ENCODE measurements at regions of chr11 and their contacts with region 1.

Region 1: DNA sequence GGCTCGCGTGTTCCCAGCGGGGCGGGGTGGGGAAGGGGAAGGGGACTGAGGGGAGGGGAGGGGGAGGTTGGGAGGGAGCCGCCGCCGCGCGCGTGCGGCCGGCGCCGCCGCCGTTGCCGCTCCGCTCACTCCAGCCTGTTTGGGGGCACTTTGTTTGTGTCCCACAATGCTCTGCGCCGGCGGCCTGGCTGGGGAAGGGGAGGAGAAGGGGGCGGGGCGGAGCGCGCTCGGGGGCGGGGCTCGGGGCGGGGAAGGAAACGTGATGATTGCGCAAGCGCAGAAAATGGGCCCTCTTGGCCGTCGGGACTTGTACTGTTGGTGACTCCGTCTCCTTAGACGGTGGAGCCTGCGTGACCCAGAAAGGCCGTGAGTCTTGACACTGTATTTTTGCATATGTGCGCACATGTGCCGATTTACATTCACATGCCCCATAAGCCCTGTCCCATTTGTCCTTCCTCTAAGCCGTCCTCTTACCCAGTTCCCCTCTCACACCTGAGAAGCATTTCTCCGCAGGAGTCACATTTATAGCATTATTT is at the start of gene ZBTB44:
- DNase-seq: peak; percentile 98
- H3K4me3 ChIP-seq: peak within 1 kb of the TSS; percentile 74 to 98 (median 89)
- H3K27ac ChIP-seq: peak within 1 kb of the TSS; percentile 94 to 96 (median 96)
- H3K4me1 ChIP-seq: peaks cover 26 to 41% (median 36%) of the 10 kb centered on the region in 4 donors
- H3K27me3 ChIP-seq: no peaks in the 10 kb centered on the region
- CTCF ChIP-seq: no peak
- EP300 ChIP-seq: no peak
- POLR2A ChIP-seq: no peak
- total RNA-seq, gene ZBTB44: 50.4 to 86.4 (median 65.3) TPM

Region 2: DNA sequence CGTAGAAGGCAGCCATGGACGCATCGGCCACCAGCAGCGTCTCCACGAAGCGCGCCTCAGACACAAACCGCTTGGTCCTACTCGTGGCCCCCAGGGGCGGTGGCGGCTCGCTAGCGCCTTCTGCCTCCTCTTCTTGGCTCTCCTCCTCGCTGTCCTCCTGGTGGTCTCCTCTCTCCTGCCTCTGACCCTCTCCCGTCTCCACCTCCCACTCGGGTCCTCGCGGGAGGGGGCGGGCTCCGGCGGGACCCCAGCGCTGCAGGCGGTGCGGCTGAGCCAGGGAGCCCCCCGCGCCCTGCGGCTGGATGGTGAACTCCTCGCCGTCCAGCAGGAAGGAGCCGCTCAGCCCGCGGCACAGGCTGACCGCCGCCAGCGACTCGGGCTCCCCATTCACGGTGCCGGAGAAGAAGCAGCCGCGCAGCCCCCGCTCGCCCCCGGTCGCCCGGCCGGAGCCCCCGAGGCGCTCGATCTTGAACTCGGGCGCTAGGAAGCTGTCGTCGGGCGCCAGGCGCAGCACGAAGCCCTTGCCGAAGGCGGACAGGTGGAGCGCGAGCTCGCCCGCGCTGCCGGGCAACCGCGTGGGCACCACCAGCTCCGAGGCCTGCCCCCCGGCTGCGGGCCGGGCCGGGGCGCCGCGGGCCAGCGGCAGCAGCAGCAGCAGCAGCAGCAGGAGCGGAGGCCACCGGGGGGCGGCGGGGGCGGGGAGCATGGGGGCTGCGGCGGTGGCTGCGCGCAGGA is 112.9 kb after region 1 on chr11:
- intact Hi-C with region 1: loop called (anchors 10 kb)
- DNase-seq: no peak
- H3K4me3 ChIP-seq: peak overlapping the region; percentile 61 to 74 (median 64)
- H3K27ac ChIP-seq: peak overlapping the region; percentile 57 to 78 (median 68)
- H3K4me1 ChIP-seq: peaks cover 21 to 53% (median 49%) of the 10 kb centered on the region in 4 donors
- H3K27me3 ChIP-seq: peaks cover 0 to 19% (median 0%) of the 10 kb centered on the region in 4 donors
- CTCF ChIP-seq: peak; percentile 37 to 45 (median 41)
- EP300 ChIP-seq: no peak
- POLR2A ChIP-seq: no peak